ENCODE measurements at regions of chr16 and their contacts with region 1.

Region 1: GRCh38 chr16:4253394-4254150 is 11.7 kb upstream of the SRL start:
- DNase-seq: peak; percentile 100
- ATAC-seq: peak; percentile 98

Region 2: GRCh38 chr16:4116337-4117249 is 137.0 kb before region 1 on chr16 and contains the start of gene ADCY9:
- intact Hi-C with region 1: loop called in 1 of 2 experiments (anchors 10 kb)
- DNase-seq: peak; percentile 83
- ATAC-seq: peak; percentile 85 to 92
- total RNA-seq, gene ADCY9: 22.6 to 25.9 TPM